ENCODE measurements at regions of chr10 and their contacts with region 1.

Region 1: GRCh38 chr10:103367782-103368518 is at the start of gene TAF5:
- DNase-seq: peak; percentile 93
- H3K4me3 Mint-ChIP-seq: peak within 1 kb of the TSS; percentile 87
- H3K27ac Mint-ChIP-seq: peak within 1 kb of the TSS; percentile 91
- H3K4me1 Mint-ChIP-seq: peaks cover 24% of the 10 kb centered on the region
- H3K27me3 Mint-ChIP-seq: no peaks in the 10 kb centered on the region
- total RNA-seq, gene TAF5: 13.1 to 13.2 TPM

Region 2: DNA sequence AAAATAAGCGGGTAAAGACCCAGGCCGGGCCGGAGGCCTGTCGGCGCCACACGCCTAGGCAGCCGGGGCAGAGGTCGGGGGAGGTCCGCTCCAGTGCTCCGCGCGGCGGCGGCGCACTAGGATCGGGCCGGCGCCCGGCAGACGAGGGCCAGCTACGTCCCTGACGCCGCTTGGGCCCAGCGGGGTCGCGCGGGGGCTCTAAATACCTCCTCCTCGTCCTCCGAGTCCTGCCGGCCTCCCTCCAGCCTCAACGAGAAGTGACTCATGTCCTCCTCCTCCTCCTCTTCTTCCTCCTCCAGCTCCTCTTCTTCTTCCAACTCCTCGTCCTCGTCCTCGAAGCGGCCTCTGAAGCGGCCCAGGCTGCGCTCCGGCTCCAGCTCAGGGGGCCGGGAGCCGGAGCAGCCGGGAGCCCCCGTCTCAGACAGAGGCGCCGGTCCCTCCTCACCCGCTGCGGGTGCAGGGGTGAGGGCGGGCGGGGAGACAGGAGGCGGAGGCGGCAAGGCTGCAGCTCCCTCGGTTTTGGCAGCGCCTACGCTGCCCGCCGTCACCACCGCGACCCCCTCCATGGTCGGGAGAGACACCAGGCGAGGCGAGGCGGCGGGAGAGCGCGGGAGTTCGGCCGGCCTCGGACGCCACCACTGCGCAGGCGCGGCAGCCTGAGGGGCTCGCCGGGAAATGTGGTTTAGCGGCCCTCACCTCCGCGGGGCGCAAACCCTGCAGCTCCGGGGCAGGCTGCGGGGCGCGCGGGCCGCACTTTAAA is 17.3 kb before region 1 on chr10 and contains the start of gene PCGF6:
- CTCF ChIA-PET with region 1: interaction called, 8 read pairs
- POLR2A ChIA-PET with region 1: interaction called, 25 read pairs
- DNase-seq: peak; percentile 73
- H3K4me3 Mint-ChIP-seq: peak within 1 kb of the TSS; percentile 90
- H3K27ac Mint-ChIP-seq: peak within 1 kb of the TSS; percentile 84
- H3K4me1 Mint-ChIP-seq: peaks cover 12% of the 10 kb centered on the region
- H3K27me3 Mint-ChIP-seq: no peaks in the 10 kb centered on the region
- total RNA-seq, gene PCGF6: 13.9 to 15.1 TPM

Region 3: GRCh38 chr10:103396064-103396788 is 28.3 kb after region 1 on chr10 and contains the starts of genes ATP5MK and PDCD11:
- CTCF ChIA-PET with region 1: interaction called, 9 read pairs
- POLR2A ChIA-PET with region 1: interaction called, 37 read pairs
- DNase-seq: peak; percentile 97
- H3K4me3 Mint-ChIP-seq: peak within 1 kb of the TSS; percentile 92
- H3K27ac Mint-ChIP-seq: peak within 1 kb of the TSS; percentile 83
- H3K4me1 Mint-ChIP-seq: peaks cover 54% of the 10 kb centered on the region
- H3K27me3 Mint-ChIP-seq: no peaks in the 10 kb centered on the region
- total RNA-seq, gene ATP5MK: 299 to 315 TPM
- total RNA-seq, gene PDCD11: 38.9 to 39.6 TPM

Region 4: GRCh38 chr10:103458720-103459119 is 90.8 kb after region 1 on chr10 and contains the start of gene CALHM1:
- CTCF ChIA-PET with region 1: no interaction called
- POLR2A ChIA-PET with region 1: no interaction called
- DNase-seq: peak; percentile 42
- H3K4me3 Mint-ChIP-seq: peak within 1 kb of the TSS; percentile 21
- H3K27ac Mint-ChIP-seq: peak within 1 kb of the TSS; percentile 71
- H3K4me1 Mint-ChIP-seq: peaks cover 36% of the 10 kb centered on the region
- H3K27me3 Mint-ChIP-seq: peaks cover 9% of the 10 kb centered on the region
- total RNA-seq, gene CALHM1: 0.58 to 0.73 TPM